GM12878 (cell line): ENCODE measurements at regions of chr3 and their contacts with region 1.

Region 1: GRCh38 chr3:62238003-62238402 is 135.3 kb downstream of the FEZF2 start:
- DNase-seq: peak; percentile 15
- ATAC-seq: peak; percentile 92
- H3K4me3 ChIP-seq: no peak overlapping the region
- H3K27ac ChIP-seq: no peak overlapping the region
- H3K4me1 ChIP-seq: no peaks in the 10 kb centered on the region
- H3K27me3 ChIP-seq: no peaks in the 10 kb centered on the region
- CTCF ChIP-seq: no peak
- EP300 ChIP-seq: peak in 1 of 2 experiments; percentile 57; a peak in 1 of 4 replicates
- POLR2A ChIP-seq: no peak
- RAD21 ChIP-seq: no peak

Region 2: GRCh38 chr3:61975199-61975598 is 262.8 kb before region 1 on chr3:
- CTCF ChIA-PET with region 1: no interaction called
- POLR2A ChIA-PET with region 1: no interaction called
- RAD21 ChIA-PET with region 1: no interaction called
- SMC1A ChIA-PET with region 1: no interaction called
- in situ Hi-C with region 1: no loop called
- intact Hi-C with region 1: no loop called
- DNase-seq: no peak
- ATAC-seq: peak; percentile 42
- H3K4me3 ChIP-seq: no peak overlapping the region
- H3K27ac ChIP-seq: no peak overlapping the region
- H3K4me1 ChIP-seq: no peaks in the 10 kb centered on the region
- H3K27me3 ChIP-seq: no peaks in the 10 kb centered on the region
- CTCF ChIP-seq: no peak
- EP300 ChIP-seq: no peak
- POLR2A ChIP-seq: no peak
- RAD21 ChIP-seq: no peak

Region 3: DNA sequence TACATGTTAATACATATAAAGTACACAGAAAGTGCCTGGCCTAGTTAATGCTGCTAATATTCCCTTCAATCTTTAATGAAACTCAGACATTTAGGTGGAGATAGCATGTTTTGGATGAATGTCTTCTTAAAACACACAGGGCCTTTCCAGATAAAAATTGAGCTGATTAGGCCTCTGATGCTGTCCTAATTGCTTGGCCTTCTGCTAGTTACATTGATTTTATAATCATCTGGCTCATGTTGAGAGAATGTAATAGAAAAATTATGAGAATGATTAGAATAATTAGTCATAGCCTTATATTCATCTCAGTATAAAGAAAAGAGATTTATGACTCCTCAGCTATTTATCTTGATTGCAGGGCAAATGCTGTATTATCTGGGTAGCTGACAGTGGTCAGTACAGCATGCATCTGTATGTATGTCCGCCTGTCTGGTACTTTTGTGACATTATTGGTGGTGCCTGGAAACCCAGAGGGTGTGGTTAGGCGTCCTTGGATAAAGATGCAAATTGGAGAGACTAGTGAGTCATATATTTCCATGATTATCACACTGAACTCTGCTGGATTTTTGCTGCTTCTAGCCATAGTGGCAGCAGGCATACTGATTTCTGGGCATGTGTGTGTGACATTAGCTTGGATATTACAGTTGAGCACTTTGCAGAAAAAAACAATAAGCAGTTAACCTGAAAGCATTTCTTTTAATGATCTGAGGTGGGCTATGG is 14.6 kb after region 1 on chr3:
- CTCF ChIA-PET with region 1: interaction called, 13 read pairs
- POLR2A ChIA-PET with region 1: interaction called, 4 read pairs
- RAD21 ChIA-PET with region 1: interaction called, 17 read pairs
- SMC1A ChIA-PET with region 1: interaction called, 27 read pairs
- in situ Hi-C with region 1: no loop called
- intact Hi-C with region 1: no loop called
- DNase-seq: no peak
- ATAC-seq: no peak; the same call in 2 of the 3 replicates
- H3K4me3 ChIP-seq: no peak overlapping the region
- H3K27ac ChIP-seq: no peak overlapping the region
- H3K4me1 ChIP-seq: no peaks in the 10 kb centered on the region
- H3K27me3 ChIP-seq: no peaks in the 10 kb centered on the region; a peak in 1 of 4 replicates
- CTCF ChIP-seq: no peak
- EP300 ChIP-seq: no peak
- POLR2A ChIP-seq: no peak
- RAD21 ChIP-seq: no peak

Region 4: GRCh38 chr3:62261121-62261520 is 23.1 kb after region 1 on chr3:
- CTCF ChIA-PET with region 1: interaction called, 12 read pairs
- POLR2A ChIA-PET with region 1: interaction called, 8 read pairs
- RAD21 ChIA-PET with region 1: interaction called, 30 read pairs
- SMC1A ChIA-PET with region 1: interaction called, 58 read pairs
- in situ Hi-C with region 1: no loop called
- intact Hi-C with region 1: no loop called
- DNase-seq: no peak
- ATAC-seq: peak; percentile 83
- H3K4me3 ChIP-seq: no peak overlapping the region
- H3K27ac ChIP-seq: no peak overlapping the region
- H3K4me1 ChIP-seq: no peaks in the 10 kb centered on the region
- H3K27me3 ChIP-seq: no peaks in the 10 kb centered on the region
- CTCF ChIP-seq: no peak
- EP300 ChIP-seq: no peak
- POLR2A ChIP-seq: no peak
- RAD21 ChIP-seq: no peak

Region 5: GRCh38 chr3:62287392-62287927 is 49.5 kb after region 1 on chr3:
- CTCF ChIA-PET with region 1: interaction called, 6 read pairs
- POLR2A ChIA-PET with region 1: no interaction called
- RAD21 ChIA-PET with region 1: interaction called, 8 read pairs
- SMC1A ChIA-PET with region 1: interaction called, 10 read pairs
- in situ Hi-C with region 1: no loop called
- intact Hi-C with region 1: no loop called
- DNase-seq: no peak
- ATAC-seq: no peak
- H3K4me3 ChIP-seq: no peak overlapping the region
- H3K27ac ChIP-seq: no peak overlapping the region
- H3K4me1 ChIP-seq: no peaks in the 10 kb centered on the region
- H3K27me3 ChIP-seq: no peaks in the 10 kb centered on the region
- CTCF ChIP-seq: no peak
- EP300 ChIP-seq: no peak
- POLR2A ChIP-seq: no peak
- RAD21 ChIP-seq: no peak

Region 6: DNA sequence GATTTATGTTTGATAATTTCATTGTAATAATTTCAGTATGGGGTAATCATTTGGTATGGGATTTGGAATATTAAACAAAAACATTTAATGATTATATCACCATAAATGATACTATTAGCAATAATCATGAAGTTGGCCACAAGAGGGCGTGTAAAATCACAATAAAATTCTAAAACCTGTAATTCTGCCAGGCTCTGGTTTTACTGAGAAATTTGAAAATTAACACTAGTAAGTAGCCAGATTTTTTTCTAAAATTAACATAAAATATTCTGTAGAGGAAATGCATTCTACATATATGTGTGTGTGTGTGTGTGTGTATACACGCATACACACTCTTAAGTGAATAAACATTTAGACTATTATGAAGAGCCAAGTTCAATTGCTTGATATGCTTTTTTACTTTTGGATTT is 94.8 kb after region 1 on chr3:
- CTCF ChIA-PET with region 1: interaction called, 9 read pairs
- POLR2A ChIA-PET with region 1: no interaction called
- RAD21 ChIA-PET with region 1: interaction called, 16 read pairs
- SMC1A ChIA-PET with region 1: interaction called, 11 read pairs
- in situ Hi-C with region 1: no loop called
- intact Hi-C with region 1: no loop called
- DNase-seq: no peak
- ATAC-seq: 0 out of 3 replicates have a peak, but pooled peaks have one; percentile 40
- H3K4me3 ChIP-seq: no peak overlapping the region
- H3K27ac ChIP-seq: no peak overlapping the region
- H3K4me1 ChIP-seq: no peaks in the 10 kb centered on the region
- H3K27me3 ChIP-seq: no peaks in the 10 kb centered on the region
- CTCF ChIP-seq: peak; percentile 37 to 51 (median 47); a peak in 5 of 6 replicates
- EP300 ChIP-seq: no peak
- POLR2A ChIP-seq: no peak
- RAD21 ChIP-seq: 0 out of 2 replicates have a peak, but pooled peaks have one; percentile 18